Tibial artery (tissue), 4 donors: ENCODE measurements at regions of chr7 and their contacts with region 1.

Region 1: GRCh38 chr7:43906331-43907010 is at the start of gene URGCP:
- DNase-seq: peak; percentile 25 to 71
- H3K4me3 ChIP-seq: peak within 1 kb of the TSS; percentile 66 to 71
- H3K27ac ChIP-seq: peak within 1 kb of the TSS; percentile 82 to 90
- H3K4me1 ChIP-seq: peaks cover 0 to 41% (median 25%) of the 10 kb centered on the region in 4 donors
- H3K27me3 ChIP-seq: no peaks in the 10 kb centered on the region
- CTCF ChIP-seq: no peak

Region 2: GRCh38 chr7:43869867-43870240 is 36.6 kb before region 1 on chr7:
- intact Hi-C with region 1: loop called (anchors 5 kb)
- DNase-seq: peak; percentile 52 to 80
- H3K4me3 ChIP-seq: peak overlapping the region; percentile 93 to 98
- H3K27ac ChIP-seq: peak overlapping the region; percentile 88 to 95
- H3K4me1 ChIP-seq: peaks cover 0 to 47% (median 34%) of the 10 kb centered on the region in 4 donors
- H3K27me3 ChIP-seq: no peaks in the 10 kb centered on the region
- CTCF ChIP-seq: no peak